ENCODE measurements at regions of chr6 and their contacts with region 1.

Region 1: DNA sequence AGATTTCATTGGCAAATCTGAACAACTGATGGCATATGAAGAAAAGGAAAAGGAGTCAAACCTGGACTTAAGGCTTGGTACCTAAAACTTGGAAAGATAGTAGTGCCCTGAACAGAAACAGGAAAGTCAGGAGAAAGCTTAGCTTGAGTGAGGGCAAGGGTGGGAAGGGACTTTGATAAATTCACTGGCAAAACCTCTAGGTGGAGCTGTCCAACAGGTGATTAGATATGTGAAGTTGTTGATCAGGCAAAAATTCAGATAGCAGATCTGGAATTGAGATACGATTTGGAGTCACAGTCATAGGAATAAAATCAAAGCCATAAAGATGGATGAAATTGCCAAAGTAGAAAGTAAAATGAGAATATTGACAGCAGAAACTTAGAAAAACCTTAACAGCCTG is 16.1 kb upstream of the ZNF292 start:
- DNase-seq: peak; percentile 66
- ATAC-seq: peak; percentile 72
- H3K4me3 ChIP-seq: no peak overlapping the region
- H3K27ac ChIP-seq: no peak overlapping the region
- H3K4me1 ChIP-seq: no peaks in the 10 kb centered on the region
- H3K27me3 ChIP-seq: peaks cover 12% of the 10 kb centered on the region; the same call in 1 of the 2 replicates
- CTCF ChIP-seq: peak; percentile 75

Region 2: GRCh38 chr6:87115402-87116135 is 23.7 kb before region 1 on chr6:
- CTCF ChIA-PET with region 1: no interaction called
- POLR2A ChIA-PET with region 1: no interaction called
- intact Hi-C with region 1: no loop called
- DNase-seq: no peak
- ATAC-seq: no peak
- H3K4me3 ChIP-seq: no peak overlapping the region
- H3K27ac ChIP-seq: no peak overlapping the region
- H3K4me1 ChIP-seq: peaks cover 6% of the 10 kb centered on the region
- H3K27me3 ChIP-seq: peaks cover 3% of the 10 kb centered on the region; the same call in 1 of the 2 replicates
- CTCF ChIP-seq: no peak

Region 3: DNA sequence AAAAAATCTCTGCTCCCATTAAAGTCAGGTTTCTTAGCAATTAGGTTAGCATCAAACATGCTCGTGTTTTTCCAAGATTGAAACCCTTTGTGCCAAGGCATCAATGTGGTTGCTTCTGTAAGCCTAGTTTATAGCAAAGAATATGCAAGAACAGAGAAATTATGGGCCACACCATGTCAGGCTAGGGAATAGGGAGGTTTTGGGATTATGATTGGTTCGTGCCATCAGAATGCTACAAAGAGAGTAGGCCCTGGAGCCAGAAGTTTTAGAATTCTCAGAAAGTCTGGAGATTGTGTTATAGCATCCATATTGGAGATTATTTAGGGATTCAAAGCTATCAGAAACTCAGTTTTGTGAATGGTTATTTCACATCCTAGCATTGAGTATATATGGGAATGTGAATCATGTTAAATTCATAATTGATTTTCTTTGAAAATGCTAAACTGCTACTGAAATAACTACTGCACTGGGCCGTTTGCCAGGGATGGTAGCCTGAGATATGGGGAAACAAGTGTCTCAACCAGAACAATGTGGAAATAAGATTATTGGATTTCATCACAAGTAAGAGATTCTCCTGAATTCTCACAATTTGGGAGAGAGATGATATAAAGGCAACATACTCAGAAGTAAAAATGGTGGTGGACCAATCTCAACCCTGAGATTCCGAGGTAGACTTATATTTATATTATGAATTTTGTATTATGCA is 61.4 kb after region 1 on chr6:
- CTCF ChIA-PET with region 1: no interaction called
- POLR2A ChIA-PET with region 1: no interaction called
- intact Hi-C with region 1: no loop called
- DNase-seq: no peak
- ATAC-seq: no peak
- H3K4me3 ChIP-seq: no peak overlapping the region
- H3K27ac ChIP-seq: no peak overlapping the region
- H3K4me1 ChIP-seq: 0 out of 2 replicates have a peak, but pooled peaks cover 4% of the 10 kb centered on the region
- H3K27me3 ChIP-seq: no peaks in the 10 kb centered on the region
- CTCF ChIP-seq: no peak

Region 4: DNA sequence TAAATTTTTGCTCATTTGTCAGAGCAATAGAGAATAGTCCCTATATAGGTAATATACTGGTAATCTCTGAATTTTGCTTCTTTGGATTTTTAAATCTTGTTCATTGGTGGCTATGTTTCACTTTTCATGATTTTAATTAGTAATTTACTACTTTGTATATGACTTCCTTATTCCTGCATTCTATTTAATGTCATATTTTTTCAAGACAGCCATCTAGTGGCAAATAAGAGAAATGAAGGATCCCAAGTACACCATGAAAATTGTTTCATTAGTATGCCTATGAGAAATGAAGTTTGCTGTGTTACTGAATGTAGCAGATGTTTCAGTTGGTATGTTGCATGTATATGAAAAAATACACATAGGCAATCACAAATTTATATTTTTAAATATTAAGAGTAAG is 98.6 kb after region 1 on chr6:
- CTCF ChIA-PET with region 1: no interaction called
- POLR2A ChIA-PET with region 1: no interaction called
- intact Hi-C with region 1: loop called (anchors 1 kb)
- DNase-seq: peak; percentile 29
- ATAC-seq: peak; percentile 22; the same call in 1 of the 2 replicates
- H3K4me3 ChIP-seq: no peak overlapping the region
- H3K27ac ChIP-seq: no peak overlapping the region
- H3K4me1 ChIP-seq: no peaks in the 10 kb centered on the region
- H3K27me3 ChIP-seq: no peaks in the 10 kb centered on the region
- CTCF ChIP-seq: peak; percentile 62

Region 5: GRCh38 chr6:87277123-87277522 is 137.9 kb after region 1 on chr6:
- CTCF ChIA-PET with region 1: no interaction called
- POLR2A ChIA-PET with region 1: no interaction called
- intact Hi-C with region 1: loop called (anchors 2 kb)
- DNase-seq: peak; percentile 57
- ATAC-seq: peak; percentile 71
- H3K4me3 ChIP-seq: no peak overlapping the region
- H3K27ac ChIP-seq: no peak overlapping the region
- H3K4me1 ChIP-seq: peaks cover 10% of the 10 kb centered on the region; the same call in 1 of the 2 replicates
- H3K27me3 ChIP-seq: no peaks in the 10 kb centered on the region
- CTCF ChIP-seq: peak; percentile 62; the same call in 1 of the 2 replicates

Measured in PC-3 (cell line).